ENCODE measurements at regions of chr16 and their contacts with region 1.

Region 1: GRCh38 chr16:82169861-82170845 is at the start of gene MPHOSPH6:
- DNase-seq: peak; percentile 93
- H3K4me3 Mint-ChIP-seq: peak within 1 kb of the TSS; percentile 91
- H3K27ac Mint-ChIP-seq: peak within 1 kb of the TSS; percentile 89
- H3K4me1 Mint-ChIP-seq: peaks cover 21% of the 10 kb centered on the region
- H3K27me3 Mint-ChIP-seq: peaks cover 34% of the 10 kb centered on the region
- total RNA-seq, gene MPHOSPH6: 27.1 to 28.7 TPM

Region 2: GRCh38 chr16:82192665-82193064 is 22.5 kb after region 1 on chr16:
- CTCF ChIA-PET with region 1: no interaction called
- POLR2A ChIA-PET with region 1: interaction called, 24 read pairs
- DNase-seq: peak; percentile 42
- H3K4me3 Mint-ChIP-seq: no peak overlapping the region
- H3K27ac Mint-ChIP-seq: peak overlapping the region; percentile 82
- H3K4me1 Mint-ChIP-seq: peaks cover 29% of the 10 kb centered on the region
- H3K27me3 Mint-ChIP-seq: peaks cover 18% of the 10 kb centered on the region